ENCODE measurements at regions of chr6 and their contacts with region 1.

Region 1: DNA sequence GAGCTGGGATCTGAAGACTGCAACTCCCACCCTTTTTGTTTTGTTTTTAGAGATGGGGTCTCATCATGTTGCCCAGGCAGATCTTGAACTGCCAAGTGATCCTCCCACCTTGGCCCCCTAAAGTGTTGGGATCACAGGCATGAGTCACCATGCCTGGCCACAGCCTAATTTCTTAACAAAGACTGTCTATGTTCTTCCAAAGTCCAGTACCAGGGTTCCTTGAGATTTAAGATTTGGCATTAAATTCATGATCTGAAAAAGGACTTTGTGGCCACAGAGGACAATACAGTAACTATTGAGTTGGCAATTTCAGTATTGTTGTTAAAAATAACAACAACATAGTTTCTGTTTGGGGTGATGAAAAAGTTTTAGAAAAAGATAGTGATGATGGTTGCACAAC is 28.7 kb upstream of the BEND3 start:
- DNase-seq: no peak
- H3K4me3 ChIP-seq: no peak overlapping the region
- H3K27me3 ChIP-seq: no peaks in the 10 kb centered on the region
- CTCF ChIP-seq: no peak

Region 2: GRCh38 chr6:106599440-106599839 is 544.6 kb before region 1 on chr6:
- CTCF ChIA-PET with region 1: no interaction called
- POLR2A ChIA-PET with region 1: interaction called, 15 read pairs
- DNase-seq: no peak
- H3K4me3 ChIP-seq: no peak overlapping the region
- H3K27me3 ChIP-seq: no peaks in the 10 kb centered on the region
- CTCF ChIP-seq: no peak

Region 3: DNA sequence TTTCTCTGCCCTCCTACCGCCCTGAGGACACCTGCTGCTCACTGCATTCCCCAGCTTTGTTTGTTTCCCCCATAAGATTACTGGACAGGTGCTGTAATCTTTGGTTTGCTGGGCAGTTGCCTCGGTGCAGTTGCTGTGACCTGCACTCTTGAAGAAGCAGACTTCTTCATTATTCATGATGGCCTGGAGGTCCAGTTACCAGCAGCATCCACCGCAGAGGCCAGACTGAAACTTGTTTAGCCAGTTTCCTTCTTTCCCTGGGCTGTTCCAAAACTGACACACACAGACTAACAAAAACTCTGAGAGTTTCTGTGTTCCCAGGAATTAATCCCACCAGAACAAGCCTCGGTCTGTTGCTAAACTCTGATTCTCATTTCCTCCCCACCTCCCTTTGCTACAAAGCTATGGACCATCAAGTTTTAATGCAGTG is 370.5 kb before region 1 on chr6:
- CTCF ChIA-PET with region 1: no interaction called
- POLR2A ChIA-PET with region 1: no interaction called
- DNase-seq: no peak
- H3K4me3 ChIP-seq: no peak overlapping the region
- H3K27me3 ChIP-seq: no peaks in the 10 kb centered on the region
- CTCF ChIP-seq: no peak

Region 4: DNA sequence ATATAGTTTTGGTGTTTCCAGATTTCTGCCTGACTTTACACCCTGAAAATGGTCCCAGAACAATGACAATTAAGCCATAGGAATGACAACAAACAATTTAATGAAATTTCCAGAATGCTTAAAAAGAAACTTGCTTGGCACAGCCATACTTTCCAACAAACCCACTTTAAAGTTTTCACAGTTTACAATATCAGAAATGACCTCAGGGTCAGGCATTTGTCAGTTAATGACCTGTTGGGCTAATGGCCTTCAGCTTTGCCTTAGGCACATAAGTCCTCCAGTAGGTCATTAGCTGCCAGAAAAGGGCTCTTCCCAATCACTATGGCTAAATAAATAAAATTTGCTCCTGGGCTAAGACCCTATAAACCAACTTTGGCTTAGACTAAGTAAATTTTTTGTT is 115.9 kb after region 1 on chr6:
- CTCF ChIA-PET with region 1: no interaction called
- POLR2A ChIA-PET with region 1: no interaction called
- DNase-seq: no peak
- H3K4me3 ChIP-seq: no peak overlapping the region
- H3K27me3 ChIP-seq: no peaks in the 10 kb centered on the region
- CTCF ChIP-seq: no peak